Activated naive CD4-positive, alpha-beta T cell treated with anti-CD3 and anti-CD28 coated beads for 36 hours (primary cell): ENCODE measurements at regions of chr7 and their contacts with region 1.

Region 1: GRCh38 chr7:78039790-78040776 is 241.5 kb downstream of the PHTF2 start:
- DNase-seq: peak; percentile 54
- H3K4me3 Mint-ChIP-seq: no peak overlapping the region
- H3K27ac Mint-ChIP-seq: no peak overlapping the region
- H3K4me1 Mint-ChIP-seq: no peaks in the 10 kb centered on the region
- H3K27me3 Mint-ChIP-seq: peaks cover 29% of the 10 kb centered on the region

Region 2: GRCh38 chr7:77651573-77652162 is 388.4 kb before region 1 on chr7:
- CTCF ChIA-PET with region 1: interaction called, 12 read pairs
- intact Hi-C with region 1: loop called (anchors 2 kb)
- DNase-seq: peak; percentile 46
- H3K4me3 Mint-ChIP-seq: no peak overlapping the region
- H3K27ac Mint-ChIP-seq: no peak overlapping the region
- H3K4me1 Mint-ChIP-seq: no peaks in the 10 kb centered on the region
- H3K27me3 Mint-ChIP-seq: no peaks in the 10 kb centered on the region

Region 3: GRCh38 chr7:77657427-77658224 is 382.5 kb before region 1 on chr7:
- CTCF ChIA-PET with region 1: interaction called, 14 read pairs
- intact Hi-C with region 1: loop called (anchors 2 kb)
- DNase-seq: peak; percentile 18
- H3K4me3 Mint-ChIP-seq: no peak overlapping the region
- H3K27ac Mint-ChIP-seq: no peak overlapping the region
- H3K4me1 Mint-ChIP-seq: no peaks in the 10 kb centered on the region
- H3K27me3 Mint-ChIP-seq: no peaks in the 10 kb centered on the region